Dorsolateral prefrontal cortex (tissue), 120 donors: ENCODE measurements at regions of chrX and their contacts with region 1.

Region 1: DNA sequence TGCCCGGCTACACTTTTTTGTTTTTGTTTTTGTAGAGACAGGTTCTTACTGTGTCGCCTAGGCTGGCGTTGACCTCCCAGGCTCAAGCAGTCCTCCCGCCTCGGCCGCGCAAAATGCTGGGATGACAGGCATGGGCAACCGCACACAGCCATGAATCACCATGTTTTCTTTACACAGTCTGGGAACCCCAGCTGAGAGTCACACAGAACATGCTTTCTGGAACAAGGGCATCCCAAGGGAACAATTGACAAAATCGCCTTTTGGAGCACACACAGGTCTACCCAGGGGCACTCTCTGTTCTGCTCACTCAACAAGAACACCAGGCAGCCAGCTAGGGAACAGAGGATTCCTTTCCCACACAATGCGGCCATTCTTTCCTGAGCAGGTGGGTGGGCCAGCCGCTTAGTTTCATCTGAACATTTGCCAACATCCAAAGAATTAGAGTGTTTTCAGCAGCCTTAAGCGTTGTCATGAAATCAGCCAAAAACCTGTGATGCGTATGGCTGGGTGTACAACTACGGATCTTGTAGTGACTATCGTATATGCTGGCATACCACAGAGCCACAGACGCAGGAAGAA is 15.7 kb downstream of the PRKX start:
- DNase-seq: peak in 7 of 10 donors; percentile 21 to 71 (median 51)
- H3K4me3 ChIP-seq: peak overlapping the region in 19 of 59 donors; percentile 2 to 47 (median 23)
- H3K27ac ChIP-seq: peak overlapping the region in 53 of 59 donors; percentile 0 to 89 (median 74)
- H3K27me3 ChIP-seq: peaks cover 0 to 4% (median 0%) of the 10 kb centered on the region in 45 donors
- CTCF ChIP-seq: no peak

Region 2: DNA sequence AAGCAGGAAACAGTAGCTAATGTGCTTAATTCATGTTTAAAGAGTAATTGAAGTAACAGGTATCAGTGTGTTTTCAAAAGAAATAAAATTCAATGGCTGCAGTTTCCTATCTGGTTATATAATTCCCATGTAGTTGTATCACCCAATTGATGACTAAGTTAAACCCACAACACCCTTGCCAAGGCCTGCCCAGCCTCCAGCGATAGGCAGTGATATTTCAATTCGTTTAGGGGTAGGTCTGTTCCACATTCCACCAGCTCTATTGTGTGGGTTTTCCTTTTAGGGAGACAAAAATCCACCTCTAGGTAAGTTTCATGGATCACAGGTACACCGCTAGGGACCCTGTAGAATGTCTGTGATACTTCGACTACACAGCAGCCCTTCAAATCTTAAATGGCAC is 326.6 kb before region 1 on chrX:
- intact Hi-C with region 1: loop called in 1 of 2 experiments (anchors 10 kb)
- DNase-seq: no peak
- H3K4me3 ChIP-seq: no peak overlapping the region
- H3K27ac ChIP-seq: no peak overlapping the region
- H3K27me3 ChIP-seq: peaks cover 0 to 24% (median 0%) of the 10 kb centered on the region in 45 donors
- CTCF ChIP-seq: no peak

Region 3: GRCh38 chrX:3501833-3502535 is 195.8 kb before region 1 on chrX:
- intact Hi-C with region 1: no loop called
- DNase-seq: peak in 3 of 10 donors; percentile 33 to 48 (median 38)
- H3K4me3 ChIP-seq: no peak overlapping the region
- H3K27ac ChIP-seq: no peak overlapping the region
- H3K27me3 ChIP-seq: peaks cover 0 to 39% (median 8%) of the 10 kb centered on the region in 45 donors
- CTCF ChIP-seq: no peak

Region 4: DNA sequence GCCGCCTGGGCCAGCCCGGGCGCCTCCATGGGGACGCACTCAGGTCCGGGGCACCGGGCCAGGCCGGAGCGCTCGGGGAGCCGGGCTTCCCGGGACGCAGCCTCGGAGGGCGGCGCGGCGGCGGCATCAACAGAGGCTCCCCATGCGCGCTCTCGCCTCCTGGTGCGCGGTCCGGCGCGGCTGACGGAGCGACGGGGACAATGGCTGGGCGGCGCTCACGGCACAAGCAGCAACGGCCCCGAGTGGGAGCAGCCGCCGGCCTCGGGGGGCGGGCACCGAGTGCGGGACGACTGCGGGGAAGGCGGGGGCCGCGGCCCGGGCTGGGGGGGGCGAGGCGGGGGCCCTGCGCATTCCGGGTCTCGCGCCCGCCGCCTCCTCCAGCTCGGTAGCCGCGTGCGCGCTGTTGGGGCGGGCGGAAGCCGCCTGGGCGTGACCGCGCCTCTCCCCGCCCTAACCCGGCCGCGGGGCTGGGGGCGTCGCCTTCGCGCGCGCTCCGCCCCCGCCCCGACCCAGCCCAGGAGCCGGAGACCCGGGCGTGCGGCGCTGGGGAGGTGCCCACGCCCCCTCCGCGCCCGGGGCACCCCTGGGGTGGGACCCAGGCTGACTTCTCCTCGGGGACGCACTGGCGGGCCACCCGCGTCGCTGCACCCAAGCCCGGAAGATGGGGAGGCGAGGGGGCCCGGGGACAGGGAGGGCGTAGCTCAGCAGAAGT is 15.6 kb after region 1 on chrX and contains the start of gene PRKX:
- intact Hi-C with region 1: loop called in 1 of 2 experiments (anchors 2 kb)
- DNase-seq: peak in 4 of 10 donors; percentile 22 to 52 (median 40)
- H3K4me3 ChIP-seq: peak within 1 kb of the TSS; percentile 24 to 78 (median 63)
- H3K27ac ChIP-seq: peak within 1 kb of the TSS in 49 of 59 donors; percentile 16 to 79 (median 61)
- H3K27me3 ChIP-seq: peaks cover 0 to 70% (median 18%) of the 10 kb centered on the region in 45 donors
- CTCF ChIP-seq: peak in 1 of 56 donors; percentile 23
- total RNA-seq, gene PRKX: 5.5 to 38.7 (median 13.9) TPM